Heart right ventricle (tissue), 16 donors: ENCODE measurements at regions of chrX and their contacts with region 1.

Region 1: DNA sequence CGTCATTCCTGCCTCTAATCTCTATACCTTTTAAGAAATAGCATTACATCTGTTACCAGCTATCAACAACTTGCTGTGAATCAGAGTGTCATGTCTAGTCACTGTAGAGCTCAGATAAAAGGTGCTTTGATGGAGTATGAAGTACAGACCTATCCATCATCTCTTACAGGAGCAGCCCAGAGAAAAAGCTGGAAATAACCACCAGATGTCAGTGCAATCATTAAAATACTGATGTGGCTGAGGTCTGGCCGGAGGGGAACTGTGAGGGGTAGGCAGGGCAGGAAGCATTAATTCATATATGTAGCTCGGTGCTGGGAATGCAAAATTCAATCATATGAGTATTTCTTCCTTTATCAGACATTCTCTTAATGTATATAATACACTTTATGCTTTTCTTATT is 100.6 kb downstream of the AKAP4 start:
- DNase-seq: no peak
- ATAC-seq: peak in 1 of 8 donors; percentile 48
- H3K4me3 ChIP-seq: no peak overlapping the region
- H3K27ac ChIP-seq: no peak overlapping the region
- H3K4me1 ChIP-seq: no peaks in the 10 kb centered on the region
- H3K27me3 ChIP-seq: peaks cover 0 to 27% (median 0%) of the 10 kb centered on the region in 7 donors
- CTCF ChIP-seq: peak in 7 of 9 donors; percentile 30 to 57 (median 39)

Region 2: GRCh38 chrX:50054145-50054544 is 46.0 kb before region 1 on chrX:
- intact Hi-C with region 1: no loop called
- DNase-seq: no peak
- ATAC-seq: no peak
- H3K4me3 ChIP-seq: no peak overlapping the region
- H3K27ac ChIP-seq: no peak overlapping the region
- H3K4me1 ChIP-seq: no peaks in the 10 kb centered on the region
- H3K27me3 ChIP-seq: no peaks in the 10 kb centered on the region
- CTCF ChIP-seq: no peak

Region 3: DNA sequence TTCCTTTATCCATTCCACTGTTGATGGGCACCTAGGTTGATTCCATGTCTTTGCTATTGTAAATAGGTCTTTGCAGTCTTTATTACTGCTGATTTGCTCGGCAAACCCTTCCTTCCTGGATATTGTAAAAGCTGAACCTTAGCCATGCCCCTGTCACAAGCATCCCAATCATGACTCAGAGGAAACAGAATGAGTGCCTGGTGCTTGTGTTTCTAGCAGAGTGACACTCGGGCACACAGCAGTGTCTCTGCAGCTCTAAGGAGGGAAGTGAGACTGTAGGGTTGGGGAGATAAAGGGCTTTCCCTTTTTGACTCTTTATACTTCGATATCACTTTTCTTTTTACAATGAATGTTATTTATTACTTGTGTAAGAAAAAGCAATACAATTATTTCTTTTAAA is 17.3 kb after region 1 on chrX:
- intact Hi-C with region 1: no loop called
- DNase-seq: no peak
- ATAC-seq: no peak
- H3K4me3 ChIP-seq: no peak overlapping the region
- H3K27ac ChIP-seq: no peak overlapping the region
- H3K4me1 ChIP-seq: no peaks in the 10 kb centered on the region
- H3K27me3 ChIP-seq: peaks cover 0 to 21% (median 0%) of the 10 kb centered on the region in 7 donors
- CTCF ChIP-seq: no peak

Region 4: GRCh38 chrX:50204364-50204899 is 104.2 kb after region 1 on chrX and contains the start of gene CCNB3:
- intact Hi-C with region 1: loop called in 2 of 10 experiments (anchors 2 kb)
- DNase-seq: peak; percentile 64 to 67
- ATAC-seq: peak; percentile 85 to 96 (median 94)
- H3K4me3 ChIP-seq: peak within 1 kb of the TSS in 9 of 10 donors; percentile 19 to 46 (median 36)
- H3K27ac ChIP-seq: peak within 1 kb of the TSS in 4 of 10 donors; percentile 21 to 71 (median 34)
- H3K4me1 ChIP-seq: peaks cover 0 to 7% (median 0%) of the 10 kb centered on the region in 9 donors
- H3K27me3 ChIP-seq: peaks cover 0 to 8% (median 0%) of the 10 kb centered on the region in 7 donors
- CTCF ChIP-seq: peak; percentile 33 to 71 (median 65)
- total RNA-seq, gene CCNB3: 0.06 to 0.42 (median 0.19) TPM in 8 of 10 donors, not detected in the others

Region 5: DNA sequence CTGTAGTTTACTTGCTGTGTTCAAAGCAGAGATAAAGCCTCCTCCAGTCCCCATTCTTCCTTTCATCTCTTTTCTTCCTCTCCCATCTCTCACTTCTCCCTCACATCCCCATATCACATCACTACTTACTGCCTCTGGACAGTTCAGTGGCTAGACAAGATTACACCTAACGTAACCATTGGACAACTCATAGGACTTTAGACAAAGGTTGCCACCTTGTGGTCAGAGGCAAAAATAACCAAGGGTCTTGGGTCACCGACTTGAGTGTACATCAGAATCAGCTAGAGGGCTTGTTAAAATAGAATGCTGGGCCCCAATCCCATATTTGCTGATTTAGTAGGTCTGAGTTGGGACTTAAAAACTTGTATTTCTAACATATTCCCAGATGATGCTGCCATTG is 479.8 kb after region 1 on chrX:
- intact Hi-C with region 1: loop called in 6 of 10 experiments (anchors 1 to 10 kb)
- DNase-seq: peak in 1 of 2 donors; percentile 18
- ATAC-seq: peak in 1 of 8 donors; percentile 60
- H3K4me3 ChIP-seq: no peak overlapping the region
- H3K27ac ChIP-seq: no peak overlapping the region
- H3K4me1 ChIP-seq: no peaks in the 10 kb centered on the region
- H3K27me3 ChIP-seq: peaks cover 0 to 44% (median 0%) of the 10 kb centered on the region in 7 donors
- CTCF ChIP-seq: peak in 8 of 9 donors; percentile 21 to 64 (median 56)